AG04450 (cell line): ENCODE measurements at regions of chr12 and their contacts with region 1.

Region 1: DNA sequence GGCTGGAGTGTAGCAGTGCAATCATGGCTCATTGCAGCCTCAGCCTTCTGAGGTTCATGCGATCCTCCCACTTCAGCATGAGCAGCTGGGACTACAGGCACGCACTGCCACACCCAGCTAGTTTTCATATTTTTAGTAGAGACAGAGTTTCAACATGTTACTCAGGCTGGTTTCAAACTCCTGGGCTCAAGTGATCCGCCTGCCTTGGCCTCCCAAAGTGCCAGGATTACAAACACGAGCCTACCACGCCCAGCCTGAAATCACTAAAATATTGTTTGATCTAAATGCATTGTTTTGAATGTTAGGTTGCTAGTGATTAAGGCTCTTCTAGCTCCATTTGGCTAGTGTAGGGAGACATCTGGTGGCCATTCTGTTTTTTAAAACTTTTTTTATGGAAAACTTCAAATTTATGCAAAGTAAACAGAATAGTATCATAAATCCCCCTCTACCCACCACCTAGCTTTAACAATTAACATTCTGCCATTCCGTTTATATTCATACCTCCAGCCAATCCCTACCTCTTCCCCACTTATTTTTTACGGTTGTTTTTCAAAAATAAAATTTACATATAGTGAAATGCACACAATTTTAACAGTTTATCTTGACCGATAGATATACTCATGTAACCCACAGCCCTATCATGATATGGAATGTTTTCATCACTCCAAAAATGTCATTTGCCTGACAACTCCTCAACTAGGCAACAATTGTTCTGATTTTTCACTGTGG is 37.8 kb downstream of the MYO1H start:
- DNase-seq: peak; percentile 3
- H3K4me3 ChIP-seq: no peak overlapping the region
- H3K27ac ChIP-seq: no peak overlapping the region
- H3K27me3 ChIP-seq: peaks cover 5% of the 10 kb centered on the region
- CTCF ChIP-seq: peak; percentile 65

Region 2: GRCh38 chr12:109093022-109093918 is 292.2 kb before region 1 on chr12 and contains the start of gene ALKBH2:
- CTCF ChIA-PET with region 1: interaction called, 14 read pairs
- POLR2A ChIA-PET with region 1: interaction called, 3 read pairs
- DNase-seq: peak; percentile 72
- H3K4me3 ChIP-seq: peak within 1 kb of the TSS; percentile 75
- H3K27ac ChIP-seq: peak within 1 kb of the TSS; percentile 65
- H3K27me3 ChIP-seq: no peaks in the 10 kb centered on the region
- CTCF ChIP-seq: peak; percentile 99
- polyA plus RNA-seq, gene ALKBH2: 13.2 and 14.6 TPM in 2 replicates

Region 3: GRCh38 chr12:109739747-109740693 is 354.5 kb after region 1 on chr12:
- CTCF ChIA-PET with region 1: interaction called, 10 read pairs
- POLR2A ChIA-PET with region 1: no interaction called
- DNase-seq: no peak
- H3K4me3 ChIP-seq: no peak overlapping the region
- H3K27ac ChIP-seq: no peak overlapping the region
- H3K27me3 ChIP-seq: peaks cover 5% of the 10 kb centered on the region
- CTCF ChIP-seq: peak; percentile 18; the same call in 1 of the 2 replicates

Region 4: GRCh38 chr12:109899783-109900751 is 514.6 kb after region 1 on chr12 and contains the start of gene TCHP:
- CTCF ChIA-PET with region 1: no interaction called
- POLR2A ChIA-PET with region 1: no interaction called
- DNase-seq: peak; percentile 64
- H3K4me3 ChIP-seq: peak within 1 kb of the TSS; percentile 83
- H3K27ac ChIP-seq: peak within 1 kb of the TSS; percentile 86
- H3K27me3 ChIP-seq: no peaks in the 10 kb centered on the region
- CTCF ChIP-seq: peak; percentile 46
- polyA plus RNA-seq, gene TCHP: 7.6 and 9.1 TPM in 2 replicates